MCF 10A (cell line): ENCODE measurements at regions of chr5 and their contacts with region 1.

Region 1: GRCh38 chr5:133868946-133869518 is 99.4 kb downstream of the C5orf15 start:
- DNase-seq: peak; percentile 80
- H3K4me3 Mint-ChIP-seq: no peak overlapping the region
- H3K27ac Mint-ChIP-seq: no peak overlapping the region
- H3K4me1 Mint-ChIP-seq: no peaks in the 10 kb centered on the region
- H3K27me3 Mint-ChIP-seq: peaks cover 70% of the 10 kb centered on the region
- CTCF ChIP-seq: peak; percentile 86

Region 2: DNA sequence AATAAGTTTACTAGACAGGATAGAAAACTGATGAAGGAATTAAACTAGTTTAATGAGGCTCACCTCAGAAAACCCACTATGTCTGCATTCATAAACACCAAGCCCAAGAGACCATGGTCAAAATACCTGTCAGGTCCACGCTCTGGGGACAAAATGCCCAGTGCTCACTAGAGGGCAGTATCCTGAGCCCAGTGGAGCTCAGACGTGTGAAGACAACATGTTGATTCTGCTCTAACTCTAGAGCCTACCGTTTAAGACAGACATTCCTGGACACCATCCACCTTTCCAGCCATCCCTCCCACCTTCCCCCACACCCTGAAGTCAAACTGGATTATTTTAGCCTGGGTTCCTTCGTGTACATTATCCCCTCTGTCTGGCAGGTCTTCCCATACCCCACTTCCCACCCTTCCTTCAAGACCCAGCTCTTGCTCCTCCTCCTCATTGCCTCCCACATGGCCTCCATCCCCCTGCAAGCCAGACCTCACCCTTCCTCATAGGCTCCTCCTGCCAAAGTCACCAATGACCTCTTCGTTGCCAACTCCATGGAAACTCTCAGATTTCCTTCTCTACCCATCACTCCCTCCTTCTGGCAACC is 114.4 kb before region 1 on chr5:
- CTCF ChIA-PET with region 1: interaction called, 12 read pairs
- POLR2A ChIA-PET with region 1: no interaction called
- intact Hi-C with region 1: loop called (anchors 5 kb)
- DNase-seq: peak; percentile 61
- H3K4me3 Mint-ChIP-seq: no peak overlapping the region
- H3K27ac Mint-ChIP-seq: no peak overlapping the region
- H3K4me1 Mint-ChIP-seq: peaks cover 16% of the 10 kb centered on the region
- H3K27me3 Mint-ChIP-seq: peaks cover 25% of the 10 kb centered on the region
- CTCF ChIP-seq: peak; percentile 41

Region 3: DNA sequence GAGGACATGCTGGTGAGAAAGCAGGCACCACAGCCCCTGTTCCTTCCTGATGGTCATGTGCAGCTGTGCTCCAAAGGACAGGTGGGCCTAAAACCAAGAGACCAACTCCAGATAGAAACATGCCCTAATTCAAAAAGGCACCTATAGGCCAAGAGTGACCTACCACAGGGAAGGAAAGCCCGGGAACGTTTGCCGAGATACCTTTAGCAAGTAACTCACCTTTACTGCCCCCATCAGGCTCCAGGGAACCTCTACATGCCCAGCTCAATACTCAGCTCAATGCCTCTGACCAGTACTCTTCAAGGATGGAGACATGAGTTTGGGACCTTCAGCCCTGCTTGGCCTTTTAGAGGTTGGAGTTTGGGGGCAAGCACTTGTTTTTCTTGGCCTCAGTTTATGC is 83.8 kb before region 1 on chr5:
- CTCF ChIA-PET with region 1: no interaction called
- POLR2A ChIA-PET with region 1: no interaction called
- intact Hi-C with region 1: no loop called
- DNase-seq: peak; percentile 14
- H3K4me3 Mint-ChIP-seq: no peak overlapping the region
- H3K27ac Mint-ChIP-seq: no peak overlapping the region
- H3K4me1 Mint-ChIP-seq: no peaks in the 10 kb centered on the region
- H3K27me3 Mint-ChIP-seq: peaks cover 9% of the 10 kb centered on the region
- CTCF ChIP-seq: no peak

Region 4: DNA sequence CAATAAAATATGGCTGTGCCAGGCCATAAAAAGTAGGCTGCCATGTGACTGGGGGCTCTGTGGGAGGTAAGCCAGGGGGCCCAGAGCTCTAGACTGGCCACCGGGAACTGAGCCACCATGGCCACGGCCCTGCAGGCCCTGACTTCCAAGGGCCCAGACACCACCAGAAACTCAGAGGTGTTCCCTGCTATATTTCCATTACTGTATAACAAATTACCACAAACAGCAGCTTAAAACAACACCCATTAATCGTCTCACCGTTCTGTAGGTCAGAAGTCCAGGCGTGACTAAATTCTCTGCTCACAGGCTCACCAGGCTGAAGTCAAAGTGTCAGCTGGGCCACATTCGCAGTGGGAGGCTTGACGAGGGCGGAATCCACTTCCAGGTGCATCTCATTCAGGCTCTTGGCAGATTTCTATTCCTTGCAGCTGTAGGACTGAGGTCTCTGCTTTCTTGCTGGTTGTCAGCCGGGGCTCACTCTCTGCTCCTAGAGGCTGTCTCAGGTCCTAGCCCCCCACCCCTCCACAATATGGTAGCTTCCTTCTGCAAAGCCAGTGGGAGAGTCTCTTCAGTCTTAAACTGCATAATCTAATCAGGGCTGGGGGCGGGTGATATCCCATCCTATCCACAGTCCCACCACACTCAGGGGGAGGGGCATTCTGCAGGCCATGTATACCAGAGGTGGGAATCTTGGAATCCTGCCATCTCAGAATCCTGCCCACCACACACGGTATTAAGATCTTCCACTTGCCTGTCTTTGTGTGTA is 26.0 kb before region 1 on chr5:
- CTCF ChIA-PET with region 1: interaction called, 14 read pairs
- POLR2A ChIA-PET with region 1: no interaction called
- intact Hi-C with region 1: no loop called
- DNase-seq: no peak
- H3K4me3 Mint-ChIP-seq: no peak overlapping the region
- H3K27ac Mint-ChIP-seq: no peak overlapping the region
- H3K4me1 Mint-ChIP-seq: no peaks in the 10 kb centered on the region
- H3K27me3 Mint-ChIP-seq: peaks cover 38% of the 10 kb centered on the region
- CTCF ChIP-seq: no peak

Region 5: DNA sequence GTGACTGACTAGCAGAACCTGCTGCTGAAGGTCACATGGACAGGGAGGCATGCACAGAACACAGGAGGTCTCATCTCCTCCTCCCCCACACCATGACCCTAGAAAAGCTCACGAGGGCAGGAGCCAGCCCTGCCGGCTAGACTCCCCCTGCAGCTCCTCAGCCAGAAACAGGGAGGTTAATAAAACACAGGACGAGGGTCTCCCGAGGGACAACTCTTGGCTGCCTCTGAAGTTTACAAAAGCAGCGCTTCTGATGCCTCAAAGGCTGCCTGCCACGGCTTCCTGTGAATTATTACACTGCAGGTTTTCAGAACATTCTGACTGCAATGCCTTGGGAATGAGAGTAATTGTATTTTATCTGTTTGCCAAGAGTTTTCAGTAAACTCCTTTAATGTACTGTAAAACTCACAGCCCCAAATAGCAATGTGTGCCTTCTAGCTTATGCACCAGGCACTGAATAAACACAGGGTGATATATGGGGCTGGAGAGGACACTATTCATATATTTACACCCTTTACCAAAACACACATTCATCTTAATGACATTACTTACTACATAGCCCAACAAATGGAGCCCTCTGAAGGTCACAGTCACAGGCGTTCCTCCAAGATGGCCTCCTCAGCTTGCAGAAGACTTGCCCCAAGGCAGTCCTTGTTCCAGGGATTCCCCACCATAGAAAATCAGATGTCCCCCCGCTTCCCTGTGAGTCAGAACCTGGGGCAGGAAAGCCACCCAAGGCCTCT is 15.7 kb after region 1 on chr5:
- CTCF ChIA-PET with region 1: interaction called, 91 read pairs
- POLR2A ChIA-PET with region 1: no interaction called
- intact Hi-C with region 1: no loop called
- DNase-seq: no peak
- H3K4me3 Mint-ChIP-seq: no peak overlapping the region
- H3K27ac Mint-ChIP-seq: no peak overlapping the region
- H3K4me1 Mint-ChIP-seq: no peaks in the 10 kb centered on the region
- H3K27me3 Mint-ChIP-seq: peaks cover 25% of the 10 kb centered on the region
- CTCF ChIP-seq: no peak